ENCODE measurements at regions of chr2 and their contacts with region 1.

Region 1: DNA sequence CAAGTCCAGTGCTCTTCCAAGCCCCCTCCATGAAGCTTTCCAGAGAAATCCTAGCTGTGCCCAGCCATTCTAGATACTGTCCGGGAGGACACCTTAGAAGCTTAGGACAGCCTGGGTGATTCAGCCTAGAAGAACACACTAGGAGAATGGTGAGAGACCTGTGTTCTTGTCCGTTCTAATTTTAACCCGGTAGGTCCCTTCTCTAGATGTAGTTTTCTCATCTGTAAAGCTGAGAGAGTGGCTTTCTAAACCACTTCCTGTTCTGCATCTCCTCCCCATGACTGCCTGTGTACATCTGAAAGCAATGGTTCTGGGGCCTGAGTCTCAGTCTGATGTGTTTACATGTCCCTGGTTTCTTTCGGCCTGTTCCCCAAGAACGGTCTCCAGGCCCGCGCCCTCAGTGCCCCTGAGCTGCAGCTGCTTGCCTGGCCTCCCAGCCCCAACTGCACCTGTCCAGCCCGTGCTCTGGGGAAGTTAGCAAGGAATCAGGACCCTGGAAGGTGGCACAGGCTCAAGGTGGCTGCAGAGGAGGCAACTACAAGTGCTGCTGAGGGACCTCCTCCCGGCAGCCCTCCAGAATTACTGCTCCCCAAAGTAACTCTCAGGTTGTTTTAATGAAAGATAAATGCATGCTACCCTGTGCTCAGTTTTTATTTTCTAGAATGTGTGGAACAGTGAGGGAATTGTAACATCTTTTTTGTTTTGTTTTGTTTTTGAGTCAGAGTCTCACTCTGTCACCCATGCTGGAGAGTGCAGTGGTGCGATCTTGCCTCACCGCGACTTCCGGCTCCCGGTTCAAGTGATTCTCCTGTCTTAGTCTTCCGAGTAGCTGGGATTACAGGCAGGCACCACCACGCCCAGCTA is 105.9 kb downstream of the LBH start:
- DNase-seq: peak in 13 of 14 experiments; percentile 21 to 84 (median 52)
- ATAC-seq: peak; percentile 77
- H3K4me3 ChIP-seq: peak overlapping the region; percentile 20
- H3K4me3 Mint-ChIP-seq: peak overlapping the region; percentile 80
- H3K27ac ChIP-seq: peak overlapping the region; percentile 54 to 68
- H3K27ac Mint-ChIP-seq: peak overlapping the region; percentile 98
- H3K4me1 ChIP-seq: peaks cover 76% of the 10 kb centered on the region
- H3K4me1 Mint-ChIP-seq: peaks cover 87% of the 10 kb centered on the region
- H3K27me3 ChIP-seq: no peaks in the 10 kb centered on the region
- H3K27me3 Mint-ChIP-seq: no peaks in the 10 kb centered on the region
- CTCF ChIP-seq: no peak

Region 2: DNA sequence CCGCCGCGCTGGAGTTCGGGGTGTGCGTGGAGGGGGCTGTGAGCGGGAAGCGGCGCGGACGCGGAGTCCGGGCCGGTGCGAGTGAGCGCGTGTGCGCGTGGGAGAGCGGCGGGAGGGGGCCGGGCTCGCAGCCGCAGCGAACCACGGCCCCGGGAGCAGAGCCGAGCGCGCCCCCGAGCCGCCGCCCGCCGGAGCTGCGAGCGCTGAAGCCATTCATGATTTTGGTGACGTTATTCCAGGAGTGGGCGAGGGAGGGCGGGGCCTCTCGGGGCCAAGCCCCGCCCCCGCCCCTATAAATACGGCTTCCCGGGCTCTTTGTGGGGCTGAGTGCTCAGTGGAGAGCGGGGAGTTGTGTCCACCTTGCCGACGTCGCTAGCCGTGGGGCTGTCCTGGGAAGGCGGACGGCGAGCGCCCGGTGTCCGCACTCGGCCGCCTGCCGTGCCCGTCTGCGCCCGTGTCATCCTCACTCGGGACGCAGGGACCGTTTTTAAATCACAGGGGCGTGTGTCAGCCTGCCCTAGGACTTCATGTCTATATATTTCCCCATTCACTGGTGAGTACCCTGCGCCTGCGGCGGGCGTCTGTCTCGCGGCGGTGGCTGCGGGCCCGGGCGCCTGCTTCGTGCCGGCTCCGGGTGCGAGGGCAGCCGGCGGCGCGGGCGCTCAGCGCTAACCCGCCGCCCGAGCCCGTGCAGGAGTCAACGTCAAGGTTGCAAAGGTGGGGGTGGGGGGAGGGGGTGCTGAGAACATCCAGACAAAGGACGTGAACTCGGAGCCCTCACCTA is 105.8 kb before region 1 on chr2 and contains the start of gene LBH:
- CTCF ChIA-PET with region 1: interaction called, 12 read pairs
- POLR2A ChIA-PET with region 1: interaction called, 73 read pairs
- intact Hi-C with region 1: loop called (anchors 2 to 5 kb)
- DNase-seq: peak; percentile 86 to 96 (median 90)
- ATAC-seq: peak; percentile 57
- H3K4me3 ChIP-seq: peak within 1 kb of the TSS; percentile 87
- H3K4me3 Mint-ChIP-seq: peak within 1 kb of the TSS; percentile 93
- H3K27ac ChIP-seq: peak within 1 kb of the TSS; percentile 90 to 96
- H3K27ac Mint-ChIP-seq: peak within 1 kb of the TSS; percentile 99
- H3K4me1 ChIP-seq: peaks cover 58% of the 10 kb centered on the region
- H3K4me1 Mint-ChIP-seq: peaks cover 72% of the 10 kb centered on the region
- H3K27me3 ChIP-seq: no peaks in the 10 kb centered on the region
- H3K27me3 Mint-ChIP-seq: no peaks in the 10 kb centered on the region
- CTCF ChIP-seq: no peak
- total RNA-seq, gene LBH: 131 to 135 TPM

Region 3: GRCh38 chr2:30252723-30253701 is 84.2 kb before region 1 on chr2:
- CTCF ChIA-PET with region 1: interaction called, 3 read pairs
- POLR2A ChIA-PET with region 1: interaction called, 12 read pairs
- intact Hi-C with region 1: loop called in 1 of 2 experiments (anchors 5 kb)
- DNase-seq: peak in 7 of 14 experiments; percentile 33 to 63 (median 45)
- ATAC-seq: peak; percentile 37
- H3K4me3 ChIP-seq: no peak overlapping the region
- H3K4me3 Mint-ChIP-seq: peak overlapping the region; percentile 57
- H3K27ac ChIP-seq: peak overlapping the region; percentile 70 to 79
- H3K27ac Mint-ChIP-seq: peak overlapping the region; percentile 99
- H3K4me1 ChIP-seq: peaks cover 98% of the 10 kb centered on the region
- H3K4me1 Mint-ChIP-seq: peaks cover 94% of the 10 kb centered on the region
- H3K27me3 ChIP-seq: no peaks in the 10 kb centered on the region
- H3K27me3 Mint-ChIP-seq: no peaks in the 10 kb centered on the region
- CTCF ChIP-seq: no peak

Region 4: GRCh38 chr2:30362468-30363081 is 25.4 kb after region 1 on chr2:
- CTCF ChIA-PET with region 1: interaction called, 4 read pairs
- POLR2A ChIA-PET with region 1: interaction called, 13 read pairs
- intact Hi-C with region 1: no loop called
- DNase-seq: peak in 1 of 14 experiments; percentile 27
- ATAC-seq: no peak
- H3K4me3 ChIP-seq: no peak overlapping the region
- H3K4me3 Mint-ChIP-seq: no peak overlapping the region
- H3K27ac ChIP-seq: no peak overlapping the region
- H3K27ac Mint-ChIP-seq: peak overlapping the region; percentile 57
- H3K4me1 ChIP-seq: peaks cover 40% of the 10 kb centered on the region
- H3K4me1 Mint-ChIP-seq: peaks cover 57% of the 10 kb centered on the region
- H3K27me3 ChIP-seq: no peaks in the 10 kb centered on the region
- H3K27me3 Mint-ChIP-seq: no peaks in the 10 kb centered on the region
- CTCF ChIP-seq: no peak

Region 5: DNA sequence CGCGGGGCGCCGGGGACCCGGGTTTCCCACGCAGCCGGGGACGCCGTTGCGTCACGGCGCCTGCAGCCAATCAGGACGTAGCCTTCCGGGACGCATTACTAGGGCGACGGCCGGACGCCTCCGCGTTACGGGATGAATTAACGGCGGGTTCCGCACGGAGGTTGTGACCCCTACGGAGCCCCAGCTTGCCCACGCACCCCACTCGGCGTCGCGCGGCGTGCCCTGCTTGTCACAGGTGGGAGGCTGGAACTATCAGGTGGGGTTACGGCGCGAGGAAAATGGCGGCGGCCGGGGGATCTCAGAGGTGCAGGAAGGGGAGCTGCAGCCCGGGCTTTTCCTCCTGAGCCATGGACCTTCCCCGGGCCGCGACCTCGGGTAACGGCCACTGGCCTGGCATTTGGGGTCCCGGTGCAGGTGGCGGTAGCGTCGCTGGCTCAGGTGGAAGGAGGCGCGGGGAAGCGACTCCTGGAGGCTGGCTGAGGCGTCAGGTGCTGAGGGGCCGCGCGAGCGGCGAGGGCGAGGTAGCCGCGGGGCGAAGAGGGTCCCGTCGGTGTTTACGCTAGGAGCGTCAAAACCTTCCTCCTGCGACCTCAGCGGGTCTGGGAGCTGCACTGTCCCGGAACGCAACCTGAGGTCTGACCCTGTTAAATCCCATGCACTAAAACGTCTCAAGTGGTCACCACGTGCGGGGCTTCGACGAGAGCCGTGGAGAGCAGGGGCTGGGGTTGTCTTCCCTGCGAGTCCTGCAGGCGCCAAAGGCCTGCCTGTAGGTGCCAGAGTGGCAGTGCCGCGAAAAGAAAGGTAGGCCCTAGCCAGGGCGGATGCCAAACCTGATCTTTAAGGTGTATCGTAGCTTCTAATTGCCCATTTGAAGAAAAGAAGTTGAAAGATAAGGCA is 110.2 kb after region 1 on chr2 and contains the start of gene LCLAT1:
- CTCF ChIA-PET with region 1: no interaction called
- POLR2A ChIA-PET with region 1: interaction called, 37 read pairs
- intact Hi-C with region 1: loop called (anchors 2 to 5 kb)
- DNase-seq: peak; percentile 68 to 94 (median 78)
- ATAC-seq: peak; percentile 84
- H3K4me3 ChIP-seq: peak within 1 kb of the TSS; percentile 82
- H3K4me3 Mint-ChIP-seq: peak within 1 kb of the TSS; percentile 99
- H3K27ac ChIP-seq: peak within 1 kb of the TSS; percentile 81 to 85
- H3K27ac Mint-ChIP-seq: peak within 1 kb of the TSS; percentile 99
- H3K4me1 ChIP-seq: peaks cover 14% of the 10 kb centered on the region
- H3K4me1 Mint-ChIP-seq: peaks cover 54% of the 10 kb centered on the region
- H3K27me3 ChIP-seq: no peaks in the 10 kb centered on the region
- H3K27me3 Mint-ChIP-seq: no peaks in the 10 kb centered on the region
- CTCF ChIP-seq: no peak
- total RNA-seq, gene LCLAT1: 8.3 to 10.2 TPM

Region 6: DNA sequence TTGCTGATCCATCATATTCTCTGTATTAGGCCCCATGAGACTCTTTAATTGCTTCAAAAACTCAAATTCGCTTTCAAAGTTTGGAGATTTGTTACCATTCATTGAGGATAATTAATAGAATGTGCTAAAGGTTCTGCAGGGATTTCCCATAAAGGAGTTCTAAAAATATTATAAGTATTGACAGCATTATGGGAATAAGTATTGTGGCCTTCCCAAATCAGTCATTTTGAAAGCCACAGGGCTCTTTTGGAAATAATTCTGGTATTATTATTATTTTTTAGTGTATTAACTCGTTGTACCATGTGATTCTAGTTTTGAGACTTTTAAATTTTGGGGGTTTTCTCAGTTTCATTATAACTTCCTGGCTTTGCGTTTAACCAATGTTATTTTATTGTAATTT is 146.9 kb after region 1 on chr2:
- CTCF ChIA-PET with region 1: no interaction called
- POLR2A ChIA-PET with region 1: no interaction called
- intact Hi-C with region 1: no loop called
- DNase-seq: no peak
- ATAC-seq: no peak
- H3K4me3 ChIP-seq: no peak overlapping the region
- H3K4me3 Mint-ChIP-seq: no peak overlapping the region
- H3K27ac ChIP-seq: no peak overlapping the region
- H3K27ac Mint-ChIP-seq: no peak overlapping the region
- H3K4me1 ChIP-seq: peaks cover 4% of the 10 kb centered on the region
- H3K4me1 Mint-ChIP-seq: peaks cover 46% of the 10 kb centered on the region
- H3K27me3 ChIP-seq: no peaks in the 10 kb centered on the region
- H3K27me3 Mint-ChIP-seq: no peaks in the 10 kb centered on the region
- CTCF ChIP-seq: no peak

Measured in CD4-positive, alpha-beta T cell (primary cell).